ENCODE measurements at regions of chr20 and their contacts with region 1.

Region 1: DNA sequence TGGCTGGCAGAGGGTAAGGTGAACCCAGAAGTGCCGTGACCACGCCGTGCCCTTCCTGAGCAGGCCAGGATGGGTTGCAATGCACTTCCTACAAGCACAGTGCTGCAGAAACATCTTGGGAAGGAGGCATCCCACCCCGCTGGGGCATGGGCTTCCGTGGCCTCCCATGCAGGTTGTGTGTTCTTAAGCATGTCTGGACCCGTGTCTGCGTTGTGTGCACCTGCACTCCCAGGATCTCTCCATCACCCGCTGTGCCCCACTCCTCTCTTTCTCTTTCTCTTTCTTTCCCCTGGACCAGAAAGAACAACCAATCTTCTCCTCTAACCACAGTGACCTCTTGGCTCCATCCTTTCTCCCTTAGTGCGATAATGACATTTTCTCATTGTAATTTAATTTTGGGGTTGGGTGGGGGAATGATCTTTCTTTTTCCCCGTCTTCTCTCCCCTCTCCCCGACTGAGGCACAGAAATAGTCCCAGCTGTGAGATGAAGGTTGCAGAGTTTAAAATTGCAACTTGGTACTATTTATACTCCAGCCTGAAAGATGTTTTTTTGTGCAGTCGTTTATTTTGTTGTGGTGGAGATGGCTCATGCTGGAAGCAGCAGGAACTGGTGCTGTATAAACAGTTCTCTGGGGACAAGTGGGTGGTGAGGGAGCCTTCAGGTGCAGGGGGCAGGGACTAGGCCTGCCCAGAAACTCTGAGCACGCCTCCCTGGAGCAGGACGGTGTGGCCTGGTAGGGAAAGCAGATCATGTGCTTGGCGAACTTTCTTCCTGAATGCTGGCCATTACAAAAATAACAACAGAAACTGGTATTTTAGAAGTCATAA is 20.5 kb downstream of the BCAS4 start:
- DNase-seq: no peak
- H3K4me3 ChIP-seq: no peak overlapping the region
- H3K27ac ChIP-seq: peak overlapping the region in 3 of 4 donors; percentile 6 to 61 (median 27)
- H3K4me1 ChIP-seq: peaks cover 4 to 23% (median 20%) of the 10 kb centered on the region in 4 donors
- H3K27me3 ChIP-seq: no peaks in the 10 kb centered on the region
- CTCF ChIP-seq: no peak
- EP300 ChIP-seq: no peak
- POLR2A ChIP-seq: no peak

Region 2: GRCh38 chr20:50929299-50930138 is 114.1 kb after region 1 on chr20:
- intact Hi-C with region 1: loop called (anchors 5 kb)
- DNase-seq: peak; percentile 96
- H3K4me3 ChIP-seq: peak overlapping the region; percentile 73 to 94 (median 87)
- H3K27ac ChIP-seq: peak overlapping the region; percentile 78 to 99 (median 83)
- H3K4me1 ChIP-seq: peaks cover 41 to 66% (median 62%) of the 10 kb centered on the region in 4 donors
- H3K27me3 ChIP-seq: peaks cover 0 to 4% (median 0%) of the 10 kb centered on the region in 4 donors
- CTCF ChIP-seq: peak; percentile 82 to 84 (median 83)
- EP300 ChIP-seq: no peak
- POLR2A ChIP-seq: no peak